Body of pancreas (tissue), 4 donors: ENCODE measurements at regions of chr1 and their contacts with region 1.

Region 1: GRCh38 chr1:173202430-173203145 is 4.5 kb downstream of the TNFSF4 start:
- DNase-seq: peak; percentile 18 to 63 (median 24)
- ATAC-seq: peak; percentile 47
- H3K4me3 ChIP-seq: no peak overlapping the region
- H3K27ac ChIP-seq: no peak overlapping the region
- H3K4me1 ChIP-seq: peaks cover 18% of the 10 kb centered on the region
- H3K27me3 ChIP-seq: no peaks in the 10 kb centered on the region
- CTCF ChIP-seq: peak; percentile 43 to 86 (median 75)
- POLR2A ChIP-seq: no peak

Region 2: GRCh38 chr1:172745014-172745413 is 457.6 kb before region 1 on chr1:
- intact Hi-C with region 1: loop called (anchors 5 kb)
- DNase-seq: peak in 1 of 4 donors; percentile 55
- ATAC-seq: peak; percentile 51
- H3K4me3 ChIP-seq: no peak overlapping the region
- H3K27ac ChIP-seq: no peak overlapping the region
- H3K4me1 ChIP-seq: no peaks in the 10 kb centered on the region
- H3K27me3 ChIP-seq: no peaks in the 10 kb centered on the region
- CTCF ChIP-seq: peak in 6 of 7 experiments; percentile 19 to 68 (median 63)
- POLR2A ChIP-seq: no peak

Region 3: DNA sequence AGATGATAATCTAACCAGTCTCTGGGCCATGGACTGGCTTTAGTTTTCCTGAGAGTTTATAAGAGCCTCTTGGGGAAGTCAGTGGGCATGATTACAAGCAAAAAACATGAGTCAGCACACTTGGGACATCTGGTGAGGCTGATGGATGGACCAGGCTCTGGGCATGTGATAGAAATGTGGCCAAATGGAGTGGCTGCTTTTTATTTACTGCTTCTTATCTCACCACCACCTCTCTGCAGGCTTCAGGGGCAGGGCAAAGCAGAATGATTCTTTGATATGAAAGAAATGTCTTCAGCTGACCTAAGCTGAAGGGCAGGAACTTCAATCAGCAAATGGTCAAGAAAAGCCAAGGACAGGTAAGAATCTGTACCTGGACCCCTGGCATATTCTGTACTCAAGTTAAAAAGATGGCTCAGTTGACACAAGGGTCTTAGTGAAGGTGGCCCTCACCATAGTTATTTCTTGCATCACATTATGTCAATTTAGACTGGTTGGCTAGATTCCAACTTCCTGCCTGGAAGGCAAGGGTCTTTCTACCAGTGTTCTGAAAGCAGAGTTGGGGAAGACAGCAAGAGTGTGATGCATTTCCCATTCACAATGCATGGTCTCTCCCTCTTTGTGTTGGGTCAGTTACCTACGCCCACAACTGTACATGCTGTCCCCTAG is 380.8 kb before region 1 on chr1:
- intact Hi-C with region 1: loop called (anchors 5 kb)
- DNase-seq: peak in 1 of 4 donors; percentile 30
- ATAC-seq: no peak
- H3K4me3 ChIP-seq: no peak overlapping the region
- H3K27ac ChIP-seq: no peak overlapping the region
- H3K4me1 ChIP-seq: no peaks in the 10 kb centered on the region
- H3K27me3 ChIP-seq: no peaks in the 10 kb centered on the region
- CTCF ChIP-seq: no peak
- POLR2A ChIP-seq: no peak